Naive thymus-derived CD4-positive, alpha-beta T cell (primary cell): ENCODE measurements at regions of chr2 and their contacts with region 1.

Region 1: DNA sequence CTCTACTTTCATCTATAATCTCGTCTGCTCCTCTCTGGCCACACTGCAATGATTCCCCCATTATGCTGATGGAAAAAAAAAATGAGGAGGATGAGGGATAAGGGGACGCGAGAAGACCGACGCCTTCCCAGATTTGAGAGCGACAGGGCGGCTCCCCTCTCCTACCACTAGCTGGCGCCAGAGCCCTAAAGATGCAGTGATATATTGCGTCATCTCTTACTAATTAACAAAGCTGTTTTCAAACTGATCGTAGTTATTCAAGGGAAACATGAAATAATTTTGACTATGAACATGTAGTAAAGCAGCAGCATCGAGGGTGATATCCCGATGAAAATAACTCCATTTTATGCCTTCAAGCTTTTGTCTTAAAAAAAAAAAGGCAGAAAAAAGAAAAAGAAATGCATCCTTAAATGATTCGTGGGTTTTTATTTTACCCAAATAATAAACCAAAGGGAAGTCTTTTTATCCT is 48.0 kb upstream of the HNRNPA3 start:
- DNase-seq: peak; percentile 65 to 77 (median 71)
- ATAC-seq: peak; percentile 89
- H3K4me3 ChIP-seq: peak overlapping the region; percentile 25
- H3K4me3 Mint-ChIP-seq: no peak overlapping the region
- H3K27ac ChIP-seq: peak overlapping the region; percentile 66
- H3K27ac Mint-ChIP-seq: no peak overlapping the region
- H3K4me1 ChIP-seq: peaks cover 11 to 16% of the 10 kb centered on the region in 2 donors
- H3K4me1 Mint-ChIP-seq: peaks cover 0 to 33% (median 12%) of the 10 kb centered on the region in 7 donors
- H3K27me3 ChIP-seq: no peaks in the 10 kb centered on the region
- H3K27me3 Mint-ChIP-seq: peaks cover 0 to 7% (median 0%) of the 10 kb centered on the region in 5 donors

Region 2: DNA sequence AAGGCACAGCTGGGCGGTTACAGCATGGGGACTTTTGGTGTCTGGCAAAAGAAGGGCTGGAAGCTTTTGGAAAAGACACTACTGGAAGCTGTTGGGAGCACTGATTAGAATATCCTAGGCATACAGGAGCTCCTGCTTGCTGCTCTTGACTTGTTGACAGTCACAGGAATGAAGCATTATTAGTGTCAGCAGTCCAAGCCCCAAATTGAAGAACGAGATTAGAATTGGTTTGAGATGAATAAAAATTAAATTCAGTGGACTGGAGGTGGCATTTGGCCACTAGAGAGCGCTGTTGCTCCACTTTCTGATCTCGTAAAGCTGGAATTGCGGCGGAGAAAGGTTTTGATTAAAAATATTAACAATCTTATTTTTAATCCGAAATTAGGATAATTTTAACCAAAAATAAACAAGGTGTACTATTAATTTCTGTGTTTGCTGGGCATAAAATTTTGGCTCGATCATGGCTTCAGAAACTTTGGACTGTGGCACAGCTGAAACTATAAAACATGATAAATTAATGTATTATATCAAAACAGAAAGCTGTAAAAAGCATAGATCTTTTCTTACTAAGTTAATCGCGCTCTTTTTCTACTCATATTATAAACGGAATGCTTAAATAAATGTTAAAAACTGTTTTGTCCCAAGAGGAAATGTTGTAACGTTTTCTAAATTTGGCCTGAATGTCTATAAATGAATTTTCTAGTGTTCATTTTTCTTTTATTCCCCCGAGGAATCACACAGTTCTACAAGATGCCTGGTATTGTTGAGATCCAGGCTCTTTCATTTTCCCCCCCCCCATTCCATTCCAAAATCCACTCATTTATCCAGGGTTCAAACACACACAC is 1037.5 kb before region 1 on chr2:
- CTCF ChIA-PET with region 1: interaction called, 4 read pairs
- POLR2A ChIA-PET with region 1: no interaction called
- intact Hi-C with region 1: loop called in 1 of 2 experiments (anchors 5 kb)
- DNase-seq: peak in 8 of 9 donors; percentile 26 to 68 (median 54)
- ATAC-seq: peak; percentile 51
- H3K4me3 ChIP-seq: no peak overlapping the region
- H3K4me3 Mint-ChIP-seq: peak overlapping the region in 4 of 10 donors; percentile 17 to 67 (median 38)
- H3K27ac ChIP-seq: no peak overlapping the region
- H3K27ac Mint-ChIP-seq: peak overlapping the region in 3 of 9 donors; percentile 8 to 63 (median 62)
- H3K4me1 ChIP-seq: peaks cover 3 to 20% of the 10 kb centered on the region in 2 donors
- H3K4me1 Mint-ChIP-seq: peaks cover 17 to 51% (median 41%) of the 10 kb centered on the region in 7 donors
- H3K27me3 ChIP-seq: peaks cover 33 to 74% of the 10 kb centered on the region in 2 donors
- H3K27me3 Mint-ChIP-seq: peaks cover 71 to 80% (median 76%) of the 10 kb centered on the region in 5 donors

Region 3: GRCh38 chr2:176140513-176141317 is 1023.9 kb before region 1 on chr2:
- CTCF ChIA-PET with region 1: no interaction called
- POLR2A ChIA-PET with region 1: no interaction called
- intact Hi-C with region 1: no loop called
- DNase-seq: peak; percentile 35 to 76 (median 61)
- ATAC-seq: peak; percentile 87
- H3K4me3 ChIP-seq: peak overlapping the region; percentile 36
- H3K4me3 Mint-ChIP-seq: peak overlapping the region in 9 of 10 donors; percentile 23 to 78 (median 43)
- H3K27ac ChIP-seq: no peak overlapping the region
- H3K27ac Mint-ChIP-seq: peak overlapping the region in 1 of 9 donors; percentile 0
- H3K4me1 ChIP-seq: peaks cover 3 to 26% of the 10 kb centered on the region in 2 donors
- H3K4me1 Mint-ChIP-seq: peaks cover 7 to 46% (median 36%) of the 10 kb centered on the region in 7 donors
- H3K27me3 ChIP-seq: peaks cover 16 to 51% of the 10 kb centered on the region in 2 donors
- H3K27me3 Mint-ChIP-seq: peaks cover 83 to 91% (median 88%) of the 10 kb centered on the region in 5 donors

Region 4: GRCh38 chr2:177239932-177240630 is 75.5 kb after region 1 on chr2:
- CTCF ChIA-PET with region 1: interaction called, 11 read pairs
- POLR2A ChIA-PET with region 1: interaction called, 4 read pairs
- intact Hi-C with region 1: no loop called
- DNase-seq: peak in 2 of 9 donors; percentile 28 to 40
- ATAC-seq: peak; percentile 91
- H3K4me3 ChIP-seq: no peak overlapping the region
- H3K4me3 Mint-ChIP-seq: peak overlapping the region; percentile 46 to 84 (median 67)
- H3K27ac ChIP-seq: peak overlapping the region; percentile 64
- H3K27ac Mint-ChIP-seq: peak overlapping the region; percentile 78 to 90 (median 86)
- H3K4me1 ChIP-seq: peaks cover 38 to 52% of the 10 kb centered on the region in 2 donors
- H3K4me1 Mint-ChIP-seq: peaks cover 60 to 91% (median 79%) of the 10 kb centered on the region in 7 donors
- H3K27me3 ChIP-seq: no peaks in the 10 kb centered on the region
- H3K27me3 Mint-ChIP-seq: no peaks in the 10 kb centered on the region

Region 5: DNA sequence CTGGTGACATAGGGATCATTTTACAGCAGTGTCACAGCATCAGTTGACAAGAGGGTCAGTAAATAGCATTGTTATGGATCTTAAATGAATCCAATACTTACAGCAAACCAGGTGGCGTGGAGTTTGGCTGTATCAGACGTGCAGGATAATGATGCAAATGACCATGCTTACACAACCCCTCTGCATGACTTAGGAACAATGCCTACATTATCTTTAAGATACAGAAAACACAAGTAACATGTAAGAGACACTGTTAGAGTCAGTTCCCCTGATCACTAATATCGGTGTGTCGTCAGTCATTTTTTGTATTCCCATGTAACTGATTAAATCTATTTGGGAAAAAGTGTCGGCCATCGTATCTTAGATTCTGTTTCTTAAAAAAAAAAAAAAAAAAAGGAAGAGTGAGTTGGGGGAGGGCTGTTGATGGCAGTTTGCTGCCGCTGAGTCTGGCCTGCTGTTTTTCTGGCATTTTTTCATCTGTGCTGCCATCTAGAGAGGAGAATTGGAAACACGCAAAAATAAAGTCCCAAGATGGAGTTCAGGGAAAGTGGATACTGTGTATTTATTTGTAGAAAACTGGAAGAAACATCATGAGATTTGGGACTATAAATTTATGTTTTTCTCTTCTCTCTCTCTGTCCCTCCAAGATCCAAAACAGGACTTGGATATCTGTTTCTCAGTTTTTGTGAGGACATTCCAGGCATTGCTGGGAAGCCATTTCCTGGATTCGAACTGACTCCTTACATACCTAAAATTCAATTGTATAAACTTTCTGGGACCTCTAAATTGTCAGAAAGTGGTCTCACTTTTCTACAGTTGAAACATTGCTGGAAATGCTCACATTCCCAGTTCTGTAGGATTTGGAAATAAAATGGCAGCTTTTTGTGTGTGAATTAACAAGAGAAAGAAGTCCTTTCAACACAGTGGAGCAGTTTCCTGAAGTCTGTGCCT is 167.7 kb after region 1 on chr2:
- CTCF ChIA-PET with region 1: interaction called, 126 read pairs
- POLR2A ChIA-PET with region 1: interaction called, 30 read pairs
- intact Hi-C with region 1: loop called (anchors 1 kb)
- DNase-seq: peak in 7 of 9 donors; percentile 37 to 76 (median 72)
- ATAC-seq: peak; percentile 91
- H3K4me3 ChIP-seq: no peak overlapping the region
- H3K4me3 Mint-ChIP-seq: peak overlapping the region in 7 of 10 donors; percentile 3 to 73 (median 38)
- H3K27ac ChIP-seq: no peak overlapping the region
- H3K27ac Mint-ChIP-seq: peak overlapping the region in 8 of 9 donors; percentile 3 to 88 (median 56)
- H3K4me1 ChIP-seq: peaks cover 0 to 18% of the 10 kb centered on the region in 2 donors
- H3K4me1 Mint-ChIP-seq: peaks cover 4 to 33% (median 15%) of the 10 kb centered on the region in 7 donors
- H3K27me3 ChIP-seq: no peaks in the 10 kb centered on the region
- H3K27me3 Mint-ChIP-seq: no peaks in the 10 kb centered on the region

Region 6: DNA sequence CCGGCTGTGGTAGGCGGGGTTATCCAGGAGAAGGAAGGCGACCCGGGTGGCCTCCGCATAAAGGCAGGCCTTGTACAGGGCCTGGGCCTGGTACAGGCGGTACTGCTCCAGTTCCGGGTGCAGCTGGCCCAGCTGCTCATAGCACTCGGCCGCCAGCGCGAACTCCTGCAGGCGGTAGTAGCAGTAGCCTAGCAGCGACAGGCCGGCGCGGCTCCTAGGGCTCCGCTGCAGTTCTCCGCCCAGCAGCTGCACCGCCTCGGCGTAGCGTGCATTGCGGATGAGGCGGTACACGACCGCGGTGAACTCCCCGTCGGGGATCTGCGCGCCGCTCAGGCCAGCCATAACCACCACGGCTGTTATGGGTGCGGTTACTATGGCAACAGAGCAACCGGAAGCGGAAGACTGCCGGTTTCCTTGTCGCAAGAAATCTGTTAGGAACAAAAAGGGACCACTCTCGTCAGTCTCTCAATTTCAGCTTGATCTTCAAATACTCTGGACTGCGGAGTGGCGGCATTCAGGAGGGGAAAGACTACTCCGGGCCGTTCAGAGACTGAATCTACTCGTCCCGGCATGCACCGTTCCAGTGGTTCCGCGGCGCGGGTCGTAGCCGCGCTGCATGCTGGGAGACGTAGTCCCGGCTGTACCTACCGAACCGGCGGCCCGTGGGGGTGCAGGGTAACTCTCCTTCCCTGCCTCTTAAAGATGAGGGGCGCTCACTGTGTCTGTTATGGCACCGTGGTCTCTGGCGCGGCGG is 388.0 kb after region 1 on chr2:
- CTCF ChIA-PET with region 1: no interaction called
- POLR2A ChIA-PET with region 1: interaction called, 3 read pairs
- intact Hi-C with region 1: loop called (anchors 2 kb)
- DNase-seq: peak; percentile 82 to 96 (median 94)
- ATAC-seq: peak; percentile 94
- H3K4me3 ChIP-seq: peak overlapping the region; percentile 89
- H3K4me3 Mint-ChIP-seq: peak overlapping the region; percentile 87 to 99 (median 94)
- H3K27ac ChIP-seq: peak overlapping the region; percentile 100
- H3K27ac Mint-ChIP-seq: peak overlapping the region; percentile 98 to 100 (median 99)
- H3K4me1 ChIP-seq: no peaks in the 10 kb centered on the region
- H3K4me1 Mint-ChIP-seq: peaks cover 4 to 29% (median 14%) of the 10 kb centered on the region in 7 donors
- H3K27me3 ChIP-seq: no peaks in the 10 kb centered on the region
- H3K27me3 Mint-ChIP-seq: peaks cover 0 to 14% (median 4%) of the 10 kb centered on the region in 5 donors

Region 7: DNA sequence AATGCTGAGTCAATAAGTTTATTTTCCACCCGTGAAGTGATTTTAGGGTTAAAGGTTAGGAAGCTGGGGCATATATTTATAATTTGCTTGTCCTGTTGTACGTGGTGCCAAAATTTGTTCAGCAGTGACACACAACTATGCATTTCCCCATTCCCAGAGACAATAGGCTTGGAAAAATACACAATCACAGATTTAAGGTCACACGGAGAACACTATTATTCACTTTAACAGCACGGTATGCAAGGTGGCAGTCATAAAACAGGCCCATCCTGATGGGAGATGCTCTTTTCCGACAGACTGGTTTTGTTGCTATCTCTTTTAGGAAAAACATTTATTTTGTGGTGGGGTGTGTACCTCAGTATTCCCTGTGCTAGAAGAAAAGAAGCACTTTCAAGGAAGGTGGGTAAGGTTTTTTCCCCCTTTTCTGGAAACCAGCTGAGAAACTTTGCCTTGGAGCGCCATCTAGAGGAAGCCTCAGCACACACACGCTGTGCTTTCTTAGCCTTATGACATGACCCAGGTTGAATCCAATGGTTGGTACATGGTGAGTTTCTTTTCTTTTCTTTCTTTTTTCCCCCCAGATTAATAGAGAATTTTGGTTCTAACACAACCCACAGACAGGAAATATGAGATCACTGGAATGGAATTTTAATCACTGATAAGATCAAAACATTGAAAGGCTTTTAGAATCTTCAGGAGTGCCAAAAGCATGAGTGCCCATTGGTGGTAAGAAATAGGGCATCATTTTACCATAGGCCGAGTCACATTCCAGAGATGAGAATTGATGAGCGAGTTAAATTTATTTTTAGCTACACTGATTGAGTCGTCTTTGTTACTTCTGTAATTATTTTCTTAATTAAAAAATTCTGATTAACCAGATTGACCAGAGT is 560.0 kb after region 1 on chr2:
- CTCF ChIA-PET with region 1: interaction called, 8 read pairs
- POLR2A ChIA-PET with region 1: no interaction called
- intact Hi-C with region 1: loop called (anchors 1 to 2 kb)
- DNase-seq: peak in 7 of 9 donors; percentile 9 to 37 (median 20)
- ATAC-seq: peak; percentile 55
- H3K4me3 ChIP-seq: no peak overlapping the region
- H3K4me3 Mint-ChIP-seq: no peak overlapping the region
- H3K27ac ChIP-seq: no peak overlapping the region
- H3K27ac Mint-ChIP-seq: no peak overlapping the region
- H3K4me1 ChIP-seq: no peaks in the 10 kb centered on the region
- H3K4me1 Mint-ChIP-seq: peaks cover 0 to 2% (median 0%) of the 10 kb centered on the region in 7 donors
- H3K27me3 ChIP-seq: no peaks in the 10 kb centered on the region
- H3K27me3 Mint-ChIP-seq: peaks cover 11 to 33% (median 14%) of the 10 kb centered on the region in 5 donors